ENCODE measurements at regions of chr6 and their contacts with region 1.

Region 1: GRCh38 chr6:157873735-157874344 is 50.8 kb downstream of the SNX9 start:
- DNase-seq: peak; percentile 56 to 95 (median 79)

Region 2: DNA sequence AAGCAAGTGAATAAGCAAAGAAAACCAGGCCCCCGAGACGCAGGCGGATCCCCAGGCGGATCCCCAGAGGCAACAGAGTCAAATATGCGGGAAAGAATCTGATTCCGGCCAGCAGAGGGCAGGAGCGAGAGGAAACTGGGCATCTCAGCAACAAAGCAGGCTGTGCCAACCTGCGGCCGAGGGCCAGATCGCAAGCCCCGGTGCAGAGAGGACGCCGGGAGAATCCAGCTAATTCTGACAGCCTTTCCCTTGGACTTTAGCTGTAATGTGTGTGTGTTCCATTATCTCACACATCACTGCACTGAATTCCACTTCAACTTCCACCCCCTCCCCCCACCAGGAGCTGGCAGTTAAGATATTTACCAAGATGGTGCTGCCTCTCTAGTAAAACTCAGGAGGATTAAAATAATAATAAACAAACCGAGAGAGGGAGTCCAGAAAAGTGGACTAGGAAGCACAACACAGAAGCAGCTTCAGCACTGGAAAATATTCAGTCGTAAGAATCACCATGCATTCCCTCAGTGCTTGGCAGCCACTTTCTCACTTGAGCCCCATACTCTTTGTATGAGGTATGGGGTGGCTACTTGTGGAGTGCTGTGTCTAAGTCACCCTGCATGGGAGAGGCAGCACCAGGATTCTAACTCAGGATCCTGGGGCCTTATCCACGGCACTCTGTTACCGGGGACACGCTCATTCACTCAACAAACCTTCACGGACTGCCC is 117.0 kb before region 1 on chr6:
- intact Hi-C with region 1: loop called (anchors 2 kb)
- DNase-seq: peak; percentile 76 to 97 (median 92)

Region 3: GRCh38 chr6:157830354-157831017 is 43.4 kb before region 1 on chr6:
- intact Hi-C with region 1: no loop called
- DNase-seq: peak in 1 of 10 donors; percentile 14

Measured in posterior cingulate gyrus (tissue), 11 donors.